A549 (cell line): ENCODE measurements at regions of chr11 and their contacts with region 1.

Region 1: DNA sequence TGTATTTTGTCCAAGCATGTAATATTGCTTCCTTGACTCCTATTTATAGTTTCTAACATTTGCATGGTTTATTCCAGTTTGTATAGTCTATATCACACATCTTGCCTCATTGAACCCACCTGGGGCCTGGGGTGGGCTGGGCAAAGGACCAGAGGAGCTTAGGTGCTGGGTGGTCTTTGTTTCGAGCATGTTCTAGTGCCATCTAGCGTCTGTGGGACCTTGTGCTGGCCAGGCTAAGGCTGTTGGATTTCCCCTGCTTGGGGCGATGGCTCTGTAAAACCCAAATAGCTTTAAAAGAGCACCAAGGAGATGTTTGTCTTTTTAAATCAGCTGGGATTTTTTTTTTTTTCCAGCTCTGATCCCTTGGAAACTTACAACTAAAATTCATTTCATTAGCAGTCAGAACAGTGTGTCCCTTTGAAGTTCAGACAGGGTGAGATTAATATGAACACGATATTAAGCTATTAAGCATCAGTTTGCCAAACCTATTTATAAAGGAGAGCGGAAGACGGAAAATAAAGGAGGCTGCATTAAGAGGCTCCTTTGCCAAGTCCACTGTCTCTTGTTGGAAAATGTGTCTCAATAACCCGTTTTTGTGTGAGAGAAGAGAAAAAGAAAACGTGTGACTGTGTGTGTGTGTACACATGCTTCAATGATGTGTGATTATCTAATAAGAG is 157.4 kb downstream of the COMMD9 start:
- DNase-seq: peak in 1 of 2 experiments; percentile 41
- ATAC-seq: peak; percentile 70 to 86; a peak in 3 of 6 replicates
- H3K4me3 ChIP-seq: no peak overlapping the region
- H3K27ac ChIP-seq: no peak overlapping the region
- H3K4me1 ChIP-seq: peaks cover 4% of the 10 kb centered on the region; the same call in 1 of the 3 replicates
- CTCF ChIP-seq: peak; percentile 71
- EP300 ChIP-seq: no peak
- POLR2A ChIP-seq: no peak
- RAD21 ChIP-seq: peak; percentile 66 to 72

Region 2: GRCh38 chr11:35598254-35599125 is 533.4 kb before region 1 on chr11:
- CTCF ChIA-PET with region 1: no interaction called
- POLR2A ChIA-PET with region 1: no interaction called
- DNase-seq: peak in 1 of 2 experiments; percentile 41
- ATAC-seq: peak; percentile 56 to 79; a peak in 5 of 6 replicates
- H3K4me3 ChIP-seq: no peak overlapping the region
- H3K27ac ChIP-seq: peak overlapping the region in 1 of 2 experiments; percentile 43; a peak in 3 of 6 replicates
- H3K4me1 ChIP-seq: no peaks in the 10 kb centered on the region; the same call in 2 of the 3 replicates
- CTCF ChIP-seq: no peak
- EP300 ChIP-seq: no peak
- POLR2A ChIP-seq: no peak
- RAD21 ChIP-seq: no peak

Region 3: DNA sequence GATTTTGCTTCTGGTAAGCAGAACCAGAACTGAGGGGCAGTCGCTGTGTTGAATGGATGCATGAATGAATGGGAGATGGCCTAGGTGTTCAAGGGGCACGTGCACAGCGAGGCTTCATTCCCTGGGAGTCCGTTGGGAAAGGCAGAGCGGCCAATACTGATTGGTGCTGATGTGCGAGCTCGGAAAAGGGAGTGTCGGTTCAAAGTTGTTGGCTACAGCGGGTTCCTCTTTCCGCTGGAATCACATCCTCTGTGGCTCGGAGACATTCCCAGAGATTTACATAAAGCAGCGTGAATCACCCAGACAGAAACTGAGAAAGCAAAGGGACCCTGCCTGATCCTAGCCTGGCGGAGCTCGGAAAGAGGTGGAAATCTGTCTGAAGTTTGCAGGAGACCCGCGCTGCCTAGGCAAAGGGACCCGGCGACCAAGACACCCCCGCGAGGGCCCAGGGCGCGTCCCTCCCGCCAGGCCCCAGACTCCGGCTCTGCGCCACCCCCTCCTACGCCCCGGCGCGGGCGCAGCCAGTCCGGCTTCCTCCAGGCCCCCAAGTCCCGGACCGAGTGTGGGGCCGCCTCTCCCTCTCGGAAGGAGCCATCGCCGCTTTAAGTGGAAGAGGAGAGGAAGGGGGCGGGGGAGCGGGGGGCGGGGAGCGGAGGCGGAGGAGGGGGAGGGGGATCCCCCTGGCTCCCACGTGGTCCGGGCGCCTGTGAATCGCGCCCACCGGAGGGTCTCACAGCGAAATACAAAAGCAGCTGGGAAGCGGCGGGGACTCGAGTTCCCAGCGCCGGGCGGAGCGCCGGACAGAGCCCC is 514.0 kb before region 1 on chr11 and contains the start of gene FJX1:
- CTCF ChIA-PET with region 1: interaction called, 10 read pairs
- POLR2A ChIA-PET with region 1: no interaction called
- DNase-seq: peak; percentile 81 to 83
- ATAC-seq: peak; percentile 68 to 73
- H3K4me3 ChIP-seq: peak within 1 kb of the TSS; percentile 90
- H3K27ac ChIP-seq: peak within 1 kb of the TSS; percentile 94 to 97
- H3K4me1 ChIP-seq: peaks cover 46% of the 10 kb centered on the region; the same call in 2 of the 3 replicates
- CTCF ChIP-seq: no peak
- EP300 ChIP-seq: peak in 1 of 2 experiments; percentile 27; a peak in 1 of 5 replicates
- POLR2A ChIP-seq: peak; percentile 19; the same call in 1 of the 2 replicates
- RAD21 ChIP-seq: no peak; a peak in 1 of 5 replicates
- polyA plus RNA-seq, gene FJX1: 6.5 and 7.1 TPM in 2 replicates

Region 4: DNA sequence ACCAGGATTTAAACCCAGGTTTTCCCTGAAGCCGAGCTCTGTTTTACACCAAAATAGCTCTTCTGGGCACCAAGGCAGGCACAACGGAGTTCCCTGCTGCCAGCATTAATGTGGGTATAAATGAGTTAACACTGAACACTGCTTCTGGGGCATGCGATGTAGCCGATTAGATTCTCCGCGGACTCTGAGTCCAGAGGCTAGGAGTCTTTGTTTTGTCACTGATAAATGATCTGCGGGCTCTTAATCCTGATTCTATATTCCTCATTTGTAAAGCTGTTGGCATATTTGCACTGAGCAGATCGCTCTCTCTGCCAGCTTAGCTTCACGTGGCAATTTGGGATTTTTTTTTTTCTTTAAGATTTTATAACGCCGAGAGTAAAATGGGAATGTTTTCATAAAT is 204.8 kb before region 1 on chr11:
- CTCF ChIA-PET with region 1: no interaction called
- POLR2A ChIA-PET with region 1: no interaction called
- DNase-seq: no peak
- ATAC-seq: no peak; a peak in 2 of 6 replicates
- H3K4me3 ChIP-seq: no peak overlapping the region
- H3K27ac ChIP-seq: peak overlapping the region; percentile 63 to 77
- H3K4me1 ChIP-seq: peaks cover 15% of the 10 kb centered on the region
- CTCF ChIP-seq: no peak
- EP300 ChIP-seq: no peak
- POLR2A ChIP-seq: no peak
- RAD21 ChIP-seq: no peak

Region 5: GRCh38 chr11:36041988-36042611 is 89.8 kb before region 1 on chr11:
- CTCF ChIA-PET with region 1: interaction called, 13 read pairs
- POLR2A ChIA-PET with region 1: no interaction called
- DNase-seq: peak in 1 of 2 experiments; percentile 8
- ATAC-seq: peak; percentile 64 to 71; a peak in 4 of 6 replicates
- H3K4me3 ChIP-seq: no peak overlapping the region
- H3K27ac ChIP-seq: no peak overlapping the region
- H3K4me1 ChIP-seq: peaks cover 3% of the 10 kb centered on the region; the same call in 2 of the 3 replicates
- CTCF ChIP-seq: peak; percentile 65
- EP300 ChIP-seq: no peak
- POLR2A ChIP-seq: no peak
- RAD21 ChIP-seq: peak; percentile 48 to 60; a peak in 4 of 5 replicates

Region 6: GRCh38 chr11:36149538-36150242 is 17.8 kb after region 1 on chr11:
- CTCF ChIA-PET with region 1: interaction called, 12 read pairs
- POLR2A ChIA-PET with region 1: no interaction called
- DNase-seq: peak; percentile 94 to 98
- ATAC-seq: peak; percentile 95 to 98
- H3K4me3 ChIP-seq: no peak overlapping the region
- H3K27ac ChIP-seq: peak overlapping the region; percentile 84 to 89
- H3K4me1 ChIP-seq: peaks cover 44% of the 10 kb centered on the region
- CTCF ChIP-seq: peak; percentile 74
- EP300 ChIP-seq: peak; percentile 41 to 55; a peak in 2 of 5 replicates
- POLR2A ChIP-seq: no peak
- RAD21 ChIP-seq: peak; percentile 74 to 81

Region 7: GRCh38 chr11:36594316-36594989 is 462.6 kb after region 1 on chr11 and contains the start of gene IFTAP:
- CTCF ChIA-PET with region 1: no interaction called
- POLR2A ChIA-PET with region 1: no interaction called
- DNase-seq: peak; percentile 85 to 90
- ATAC-seq: peak; percentile 100
- H3K4me3 ChIP-seq: peak within 1 kb of the TSS; percentile 71
- H3K27ac ChIP-seq: peak within 1 kb of the TSS; percentile 72 to 79
- H3K4me1 ChIP-seq: peaks cover 5% of the 10 kb centered on the region; the same call in 1 of the 3 replicates
- CTCF ChIP-seq: no peak
- EP300 ChIP-seq: no peak
- POLR2A ChIP-seq: peak; percentile 34
- RAD21 ChIP-seq: no peak
- polyA plus RNA-seq, gene IFTAP: 38.7 and 52.4 TPM in 2 replicates